Activated T-helper 2 cell treated with anti-CD3 and anti-CD28 coated beads, Interferon-gamma antibody, Interleukin-2, Interleukin-4, amounts not matched to agents 10 μg/mL and 5 μg/mL and 100 μg/mL, durations not matched to agents 14 hours and 24 hours and 36 hours (primary cell): ENCODE measurements at regions of chr1 and their contacts with region 1.

Region 1: DNA sequence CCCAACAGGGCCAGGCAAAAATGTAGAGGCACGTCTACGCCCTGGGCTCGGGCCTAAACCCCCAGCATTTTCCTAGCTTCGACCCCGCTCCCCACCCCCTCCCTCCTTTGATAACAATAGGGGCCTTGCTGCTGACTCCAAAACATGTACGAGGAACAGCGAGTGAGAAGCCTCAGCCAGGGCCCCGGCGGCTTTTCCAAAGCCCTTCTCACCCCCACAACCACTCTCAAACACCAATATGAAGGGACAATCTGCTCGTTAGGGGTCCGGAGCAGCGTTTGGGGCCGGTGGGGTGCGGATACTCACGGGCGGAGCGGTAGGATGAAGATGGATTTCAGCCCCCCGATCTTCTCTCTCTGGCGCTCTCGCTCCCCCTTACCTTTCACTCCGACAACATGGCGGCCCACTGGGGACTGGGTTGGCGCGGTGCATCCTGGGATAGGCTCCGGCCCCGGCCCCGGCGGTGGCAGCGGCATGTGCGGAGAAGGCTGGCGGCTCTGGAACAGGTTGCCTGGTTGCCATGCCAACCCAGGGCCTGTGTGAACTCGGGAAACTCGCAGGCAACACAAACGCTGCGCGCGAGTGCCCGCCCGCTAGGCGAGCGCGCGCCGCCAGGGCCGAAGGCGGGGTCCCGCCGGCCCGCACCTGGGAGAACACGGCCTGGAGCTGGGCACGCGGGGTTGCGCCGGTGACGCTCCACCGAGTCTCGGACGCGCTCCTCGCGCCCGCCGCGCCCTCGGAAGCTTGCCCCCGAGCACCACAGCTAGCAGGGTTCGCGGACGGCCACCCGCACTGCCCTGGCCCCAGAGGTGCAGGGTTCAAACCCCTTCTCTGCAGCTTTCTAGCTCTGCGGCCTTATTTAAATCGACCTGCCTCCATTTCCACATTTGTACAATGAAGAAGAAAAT is at the start of gene PUM1:
- DNase-seq: peak; percentile 98
- H3K4me3 Mint-ChIP-seq: peak within 1 kb of the TSS; percentile 99
- H3K27ac Mint-ChIP-seq: peak within 1 kb of the TSS; percentile 96
- H3K4me1 Mint-ChIP-seq: peaks cover 20% of the 10 kb centered on the region
- H3K27me3 Mint-ChIP-seq: no peaks in the 10 kb centered on the region
- total RNA-seq, gene PUM1: 121 and 125 TPM in 2 replicates

Region 2: DNA sequence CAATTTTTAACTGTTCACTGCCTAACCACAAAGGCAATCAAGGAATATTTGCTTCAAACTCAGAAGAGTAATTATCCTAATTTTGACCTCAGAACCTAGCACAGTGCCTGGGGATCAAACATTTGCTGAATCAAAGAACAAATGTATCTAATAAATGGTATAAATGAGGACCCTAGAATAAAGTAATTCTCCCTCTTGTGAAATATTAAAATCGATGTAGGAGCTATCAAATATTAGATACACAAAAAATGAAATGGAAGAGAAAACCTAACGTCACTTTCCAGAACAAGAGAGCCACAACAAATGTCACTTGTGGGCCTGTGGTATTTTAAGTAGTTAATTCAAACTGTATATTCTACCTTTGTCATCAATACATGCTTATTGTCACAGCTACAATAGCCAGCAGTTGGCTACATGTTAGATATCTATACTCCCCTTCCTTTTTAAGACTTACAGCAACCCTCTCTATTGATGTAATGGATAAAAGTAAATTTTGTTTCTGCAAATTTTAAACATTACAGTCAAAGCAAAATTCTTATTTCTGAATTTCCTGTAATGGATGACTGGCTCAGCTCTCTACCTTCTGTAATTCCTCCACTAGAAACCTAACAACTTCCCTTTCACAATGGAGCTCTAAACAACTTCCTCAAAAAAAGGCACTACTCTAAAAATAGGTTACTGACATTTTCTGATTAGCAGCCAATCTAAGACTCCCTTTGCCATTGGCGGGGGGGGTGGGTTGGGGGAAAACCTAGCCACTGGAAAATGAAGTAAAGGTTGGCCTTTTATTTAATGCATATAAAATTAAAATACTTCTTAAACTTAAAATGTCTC is 37.7 kb before region 1 on chr1:
- intact Hi-C with region 1: loop called (anchors 5 kb)
- DNase-seq: no peak
- H3K4me3 Mint-ChIP-seq: no peak overlapping the region
- H3K27ac Mint-ChIP-seq: peak overlapping the region; percentile 5
- H3K4me1 Mint-ChIP-seq: peaks cover 54% of the 10 kb centered on the region
- H3K27me3 Mint-ChIP-seq: no peaks in the 10 kb centered on the region

Region 3: GRCh38 chr1:31038360-31038759 is 27.2 kb before region 1 on chr1:
- intact Hi-C with region 1: loop called (anchors 2 kb)
- DNase-seq: no peak
- H3K4me3 Mint-ChIP-seq: no peak overlapping the region
- H3K27ac Mint-ChIP-seq: peak overlapping the region; percentile 40
- H3K4me1 Mint-ChIP-seq: peaks cover 50% of the 10 kb centered on the region
- H3K27me3 Mint-ChIP-seq: no peaks in the 10 kb centered on the region

Region 4: GRCh38 chr1:31054349-31054748 is 11.2 kb before region 1 on chr1:
- intact Hi-C with region 1: loop called (anchors 1 kb)
- DNase-seq: no peak
- H3K4me3 Mint-ChIP-seq: no peak overlapping the region
- H3K27ac Mint-ChIP-seq: peak overlapping the region; percentile 84
- H3K4me1 Mint-ChIP-seq: peaks cover 42% of the 10 kb centered on the region
- H3K27me3 Mint-ChIP-seq: no peaks in the 10 kb centered on the region

Region 5: DNA sequence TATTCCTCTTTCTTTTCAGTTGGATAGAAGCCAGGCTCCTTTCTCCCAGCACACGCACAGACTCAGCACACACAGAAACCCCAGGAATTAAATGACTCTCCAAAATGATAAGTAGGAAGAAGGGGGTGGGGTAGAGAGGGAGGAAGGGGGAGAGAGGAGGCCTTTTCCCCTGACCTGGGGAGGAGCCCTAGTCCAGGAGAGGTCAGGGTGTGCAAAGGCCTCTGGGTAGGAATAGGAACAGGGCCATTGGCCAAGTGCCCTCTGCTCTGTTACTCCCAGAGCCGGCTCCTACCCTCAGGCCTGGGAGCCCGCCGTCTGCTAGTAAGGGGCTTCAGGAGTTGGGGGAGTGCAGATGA is 35.6 kb after region 1 on chr1:
- intact Hi-C with region 1: no loop called
- DNase-seq: no peak
- H3K4me3 Mint-ChIP-seq: no peak overlapping the region
- H3K27ac Mint-ChIP-seq: no peak overlapping the region
- H3K4me1 Mint-ChIP-seq: no peaks in the 10 kb centered on the region
- H3K27me3 Mint-ChIP-seq: no peaks in the 10 kb centered on the region

Region 6: GRCh38 chr1:31111290-31111977 is 45.9 kb after region 1 on chr1:
- intact Hi-C with region 1: no loop called
- DNase-seq: no peak
- H3K4me3 Mint-ChIP-seq: no peak overlapping the region
- H3K27ac Mint-ChIP-seq: no peak overlapping the region
- H3K4me1 Mint-ChIP-seq: no peaks in the 10 kb centered on the region
- H3K27me3 Mint-ChIP-seq: peaks cover 12% of the 10 kb centered on the region

Region 7: GRCh38 chr1:31296486-31297276 is 231.1 kb after region 1 on chr1 and contains the starts of genes SNRNP40 and ZCCHC17:
- intact Hi-C with region 1: loop called (anchors 1 kb)
- DNase-seq: peak; percentile 94
- H3K4me3 Mint-ChIP-seq: no peak within 1 kb of the TSS
- H3K27ac Mint-ChIP-seq: no peak within 1 kb of the TSS
- H3K4me1 Mint-ChIP-seq: peaks cover 23% of the 10 kb centered on the region
- H3K27me3 Mint-ChIP-seq: no peaks in the 10 kb centered on the region
- total RNA-seq, gene SNRNP40: 115 and 116 TPM in 2 replicates
- total RNA-seq, gene ZCCHC17: 26.2 and 27.2 TPM in 2 replicates